ENCODE measurements at regions of chr19 and their contacts with region 1.

Region 1: GRCh38 chr19:45886427-45887199 is 672 bp upstream of the IRF2BP1 start:
- DNase-seq: peak; percentile 92 to 94 (median 94)
- ATAC-seq: peak; percentile 89 to 97 (median 94)
- H3K4me3 ChIP-seq: peak overlapping the region; percentile 52 to 93 (median 80)
- H3K27ac ChIP-seq: peak overlapping the region; percentile 75 to 95 (median 92)
- H3K4me1 ChIP-seq: peaks cover 11 to 50% (median 33%) of the 10 kb centered on the region in 12 donors
- H3K27me3 ChIP-seq: no peaks in the 10 kb centered on the region
- CTCF ChIP-seq: no peak
- POLR2A ChIP-seq: peak; percentile 10 to 73

Region 2: DNA sequence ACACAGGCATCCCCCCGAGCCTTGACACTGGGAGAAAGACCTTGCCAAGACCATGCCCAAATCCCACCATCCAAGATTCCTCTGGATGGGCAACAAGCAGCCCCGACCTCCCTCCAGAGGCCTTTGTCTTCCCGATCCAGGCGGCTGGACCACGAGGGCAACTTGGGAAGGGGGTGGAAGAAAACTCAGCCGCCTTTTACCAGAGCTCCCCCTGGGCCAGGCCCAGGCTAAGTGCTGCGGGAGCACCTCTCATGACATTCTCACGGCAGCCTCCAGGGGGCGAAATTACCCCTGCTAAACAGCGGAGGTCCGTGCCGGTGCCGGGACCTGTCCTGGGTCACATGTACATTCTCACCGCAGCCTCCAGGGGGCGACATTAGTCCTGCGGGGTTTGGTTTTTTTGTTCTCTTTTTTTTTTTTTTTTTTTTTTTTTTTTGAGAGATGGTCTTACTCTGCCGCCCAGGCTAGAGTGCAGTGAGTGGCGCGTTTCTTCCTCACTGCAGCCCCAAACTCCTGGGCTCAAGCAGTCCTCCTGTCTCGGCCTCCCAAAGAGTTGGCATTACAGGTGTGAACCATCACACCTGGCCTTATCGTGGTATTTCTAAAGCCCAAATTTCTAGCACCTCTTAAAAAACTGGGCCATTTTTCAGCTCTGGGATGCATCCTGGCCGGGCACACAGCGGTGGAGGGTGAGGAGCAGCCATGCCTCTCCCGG is 69.4 kb before region 1 on chr19:
- intact Hi-C with region 1: loop called in 3 of 10 experiments (anchors 5 kb)
- DNase-seq: peak; percentile 89 to 96 (median 94)
- ATAC-seq: peak; percentile 83 to 90 (median 85)
- H3K4me3 ChIP-seq: no peak overlapping the region
- H3K27ac ChIP-seq: no peak overlapping the region
- H3K4me1 ChIP-seq: peaks cover 0 to 33% (median 13%) of the 10 kb centered on the region in 12 donors
- H3K27me3 ChIP-seq: peaks cover 0 to 17% (median 0%) of the 10 kb centered on the region in 9 donors
- CTCF ChIP-seq: peak; percentile 93 to 99 (median 98)
- POLR2A ChIP-seq: no peak

Region 3: DNA sequence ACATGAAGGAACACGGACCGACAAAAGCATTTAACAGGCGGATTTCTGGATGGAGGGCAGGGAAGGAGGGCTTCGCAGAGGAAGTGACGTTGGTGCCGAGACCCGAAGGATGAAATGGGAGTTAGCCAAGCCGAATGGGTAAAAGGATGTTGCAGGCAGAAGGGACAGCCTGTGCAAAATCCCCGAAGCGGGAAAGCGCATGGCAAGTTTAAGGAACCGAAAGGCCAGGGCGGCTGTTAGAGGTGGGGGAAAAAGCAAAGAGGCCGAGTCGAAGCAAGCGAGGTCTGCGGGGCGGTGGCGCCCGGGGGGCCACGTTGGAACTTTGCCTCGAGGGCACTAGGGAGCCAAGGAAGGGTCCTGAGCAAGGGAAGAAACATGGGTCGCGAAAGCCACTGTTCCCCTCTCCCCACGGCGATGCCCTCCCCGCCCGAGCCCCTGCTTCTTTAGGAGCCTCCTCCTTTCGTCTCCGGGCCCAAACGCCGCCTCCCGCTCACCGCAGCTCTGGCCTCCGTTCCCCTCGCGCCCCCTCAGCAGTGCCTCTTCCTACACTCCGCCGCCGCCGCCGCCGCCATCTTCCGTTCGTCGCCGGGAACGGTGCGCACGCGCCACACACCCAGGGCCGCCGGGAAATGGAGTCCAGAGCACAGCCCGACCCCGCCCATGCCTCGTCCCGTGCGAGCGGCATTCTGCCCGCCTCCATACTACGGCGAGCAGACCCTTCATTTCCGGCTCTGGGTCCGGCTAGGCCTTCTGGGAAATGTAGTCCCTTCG is 23.9 kb before region 1 on chr19 and contains the start of gene SYMPK:
- intact Hi-C with region 1: loop called in 4 of 10 experiments (anchors 1 kb)
- DNase-seq: peak; percentile 99
- ATAC-seq: peak; percentile 99 to 100 (median 100)
- H3K4me3 ChIP-seq: peak within 1 kb of the TSS; percentile 65 to 98 (median 92)
- H3K27ac ChIP-seq: peak within 1 kb of the TSS; percentile 80 to 96 (median 92)
- H3K4me1 ChIP-seq: peaks cover 0 to 28% (median 21%) of the 10 kb centered on the region in 12 donors
- H3K27me3 ChIP-seq: peaks cover 8 to 27% (median 16%) of the 10 kb centered on the region in 9 donors
- CTCF ChIP-seq: no peak
- POLR2A ChIP-seq: peak in 1 of 2 donors; percentile 64
- total RNA-seq, gene SYMPK: 21.9 to 47.7 (median 34.8) TPM

Region 4: DNA sequence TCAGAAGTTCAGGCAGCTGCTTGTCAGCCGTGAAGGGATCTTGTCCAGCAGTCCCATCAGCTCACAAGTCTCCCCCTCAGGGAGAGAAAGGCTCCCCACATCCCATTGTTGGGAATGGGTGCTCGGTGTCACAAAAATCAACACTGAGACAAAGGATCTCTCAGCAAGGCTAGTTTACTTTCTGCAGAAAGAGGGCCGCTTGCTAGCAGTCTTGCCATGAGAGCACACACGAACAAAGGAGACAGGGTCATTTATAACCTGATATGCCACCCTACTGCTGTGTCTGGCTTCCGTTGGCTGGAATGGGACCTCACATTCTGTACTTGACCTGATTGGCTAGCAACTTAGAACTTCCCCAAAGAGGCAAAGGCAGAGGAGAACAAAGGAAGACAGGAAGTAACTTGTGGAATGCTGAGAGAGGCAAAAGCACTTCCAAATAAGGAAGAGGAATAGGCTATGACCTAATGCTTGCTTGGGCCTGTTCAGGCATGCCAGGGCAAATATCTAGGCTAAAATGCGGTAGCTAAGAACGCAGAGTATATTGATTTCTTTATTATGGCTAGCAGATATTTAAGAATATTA is 246.6 kb after region 1 on chr19:
- intact Hi-C with region 1: no loop called
- DNase-seq: peak in 2 of 5 donors; percentile 14 to 20
- ATAC-seq: peak in 1 of 4 donors; percentile 71
- H3K4me3 ChIP-seq: no peak overlapping the region
- H3K27ac ChIP-seq: peak overlapping the region in 9 of 12 donors; percentile 12 to 74 (median 58)
- H3K4me1 ChIP-seq: peaks cover 0 to 19% (median 13%) of the 10 kb centered on the region in 12 donors
- H3K27me3 ChIP-seq: peaks cover 0 to 5% (median 0%) of the 10 kb centered on the region in 9 donors
- CTCF ChIP-seq: no peak
- POLR2A ChIP-seq: no peak

Measured in heart left ventricle (tissue), 16 donors.